ENCODE measurements at regions of chr17 and their contacts with region 1.

Region 1: DNA sequence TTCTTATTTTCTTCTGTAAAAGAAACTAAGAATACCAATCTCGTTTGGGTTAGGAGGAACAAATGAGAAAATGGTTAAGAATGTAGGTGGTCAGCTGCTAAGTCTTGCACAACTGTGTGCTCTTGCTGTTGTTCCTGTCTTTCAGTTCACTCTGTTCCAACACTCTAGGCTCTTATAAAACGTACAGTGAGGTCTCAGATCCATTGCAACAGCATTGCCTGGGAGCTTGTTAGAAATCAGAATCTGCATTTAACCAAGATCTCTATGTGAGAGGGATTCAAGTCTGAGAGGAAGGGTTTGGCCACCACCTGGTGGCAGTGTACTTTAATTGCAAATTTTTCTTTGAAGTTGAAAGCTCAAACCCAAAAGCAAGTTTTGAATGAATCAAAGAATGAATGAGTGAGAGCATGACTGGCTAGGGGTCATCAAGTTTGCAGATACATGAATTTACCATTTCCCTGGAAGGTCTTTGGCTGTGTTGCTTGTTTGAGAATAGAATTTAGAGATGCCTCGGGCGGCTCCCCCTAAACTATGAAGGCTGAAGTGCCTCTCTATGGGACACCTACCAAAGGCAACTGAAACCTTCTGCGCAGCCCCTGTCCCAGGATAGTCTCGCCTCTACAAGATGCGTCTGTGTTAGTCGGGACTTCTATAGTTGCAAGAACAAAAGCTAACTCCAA is 2.5 kb downstream of the ALOX15B start:
- DNase-seq: peak; percentile 30 to 60 (median 38)
- ATAC-seq: peak; percentile 57; the same call in 2 of the 3 replicates
- H3K4me3 ChIP-seq: no peak overlapping the region
- H3K27ac ChIP-seq: no peak overlapping the region
- H3K4me1 ChIP-seq: peaks cover 0 to 6% of the 10 kb centered on the region in 2 experiments; a peak in 3 of 5 replicates
- H3K27me3 ChIP-seq: peaks cover 11 to 30% of the 10 kb centered on the region in 2 experiments; a peak in 4 of 5 replicates
- CTCF ChIP-seq: peak; percentile 45 to 65 (median 47); a peak in 4 of 6 replicates
- EP300 ChIP-seq: no peak
- POLR2A ChIP-seq: no peak
- RAD21 ChIP-seq: peak; percentile 45 to 72

Region 2: DNA sequence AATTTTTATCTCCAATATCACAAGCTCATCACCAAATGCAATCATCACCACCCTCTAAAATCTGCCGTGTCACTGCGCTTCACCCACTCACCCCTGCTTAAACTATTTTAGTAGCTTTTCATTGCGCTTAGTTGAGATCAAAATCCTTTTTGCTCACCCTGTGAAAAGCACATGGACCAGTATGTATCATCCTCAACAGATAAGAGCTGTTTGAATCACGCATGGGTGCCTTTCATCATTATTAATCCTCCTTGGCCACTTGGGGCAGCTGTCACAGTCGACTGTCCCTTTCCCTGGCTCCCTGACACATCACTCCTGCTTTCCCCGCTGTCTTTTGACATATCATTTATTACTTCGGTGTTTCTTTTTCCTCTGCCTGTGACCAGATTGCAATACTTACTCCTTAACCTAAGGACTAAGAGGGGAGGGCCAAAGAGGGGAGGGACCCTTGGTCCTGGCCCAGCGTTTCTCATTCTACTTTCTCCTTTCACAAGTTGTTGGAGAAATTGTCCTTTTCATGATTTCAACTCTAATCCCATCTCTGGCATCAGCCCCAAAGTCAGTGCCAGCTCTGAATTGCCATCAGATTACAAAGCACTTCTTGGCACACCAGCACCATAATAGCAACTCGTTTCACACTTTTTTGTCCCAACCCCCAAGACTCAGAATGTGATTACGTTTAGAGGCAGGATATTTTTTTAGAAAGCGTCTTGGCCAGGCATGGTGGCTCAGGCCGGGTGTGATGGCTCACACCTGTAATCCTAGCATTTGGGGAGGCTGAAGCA is 216.0 kb before region 1 on chr17:
- CTCF ChIA-PET with region 1: no interaction called
- POLR2A ChIA-PET with region 1: no interaction called
- in situ Hi-C with region 1: no loop called
- intact Hi-C with region 1: loop called (anchors 10 kb)
- DNase-seq: peak in 1 of 4 experiments; percentile 29
- ATAC-seq: 0 out of 3 replicates have a peak, but pooled peaks have one; percentile 47
- H3K4me3 ChIP-seq: no peak overlapping the region
- H3K27ac ChIP-seq: no peak overlapping the region
- H3K4me1 ChIP-seq: peaks cover 0 to 9% of the 10 kb centered on the region in 2 experiments; a peak in 2 of 5 replicates
- H3K27me3 ChIP-seq: peaks cover 9 to 32% of the 10 kb centered on the region in 2 experiments; a peak in 4 of 5 replicates
- CTCF ChIP-seq: peak; percentile 16 to 42 (median 35); a peak in 3 of 6 replicates
- EP300 ChIP-seq: no peak
- POLR2A ChIP-seq: no peak
- RAD21 ChIP-seq: no peak

Region 3: DNA sequence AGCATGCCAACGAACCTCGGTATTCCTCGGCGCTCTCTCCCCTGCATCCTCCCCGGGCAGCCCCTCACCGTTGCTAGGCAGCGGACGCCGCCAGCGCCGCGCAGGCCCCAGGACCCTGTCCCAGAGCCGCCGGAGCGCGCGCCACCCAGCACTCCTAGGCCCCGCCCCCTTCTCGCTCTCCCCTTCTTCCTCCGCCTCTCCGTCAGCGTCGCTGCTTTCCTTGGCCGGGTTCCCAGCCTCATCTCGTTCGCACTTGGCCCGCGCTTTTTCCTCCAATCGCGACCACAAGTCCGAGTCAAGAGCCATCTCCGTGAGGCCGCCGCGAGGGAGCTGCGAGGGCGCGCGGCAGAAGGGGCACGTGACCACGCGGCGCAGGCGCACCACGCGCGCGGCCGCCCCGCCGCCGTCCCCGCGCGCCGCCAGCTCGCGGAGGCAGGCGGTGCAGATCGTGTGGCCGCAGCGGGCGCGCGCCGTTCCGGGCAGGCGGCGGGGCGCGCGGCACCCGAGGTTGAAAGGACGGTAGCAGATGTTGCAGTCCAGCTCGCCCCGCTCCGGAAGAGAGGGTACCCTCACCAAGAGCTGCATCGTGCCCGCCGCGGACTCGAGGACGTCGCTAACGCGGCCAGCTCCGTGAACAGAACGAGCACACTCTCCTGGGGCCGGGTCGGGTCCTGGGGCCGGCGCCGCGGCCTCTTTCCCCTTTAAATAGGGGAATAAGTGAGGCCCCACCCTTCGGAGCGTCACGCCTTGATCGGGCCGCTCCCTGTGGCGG is 125.6 kb before region 1 on chr17 and contains the start of gene RNF227:
- CTCF ChIA-PET with region 1: interaction called, 4 read pairs
- POLR2A ChIA-PET with region 1: no interaction called
- in situ Hi-C with region 1: no loop called
- intact Hi-C with region 1: loop called (anchors 1 kb)
- DNase-seq: peak; percentile 72 to 92 (median 74)
- ATAC-seq: peak; percentile 87
- H3K4me3 ChIP-seq: peak within 1 kb of the TSS; percentile 46
- H3K27ac ChIP-seq: peak within 1 kb of the TSS; percentile 88
- H3K4me1 ChIP-seq: peaks cover 18 to 24% of the 10 kb centered on the region in 2 experiments; a peak in 4 of 5 replicates
- H3K27me3 ChIP-seq: no peaks in the 10 kb centered on the region
- CTCF ChIP-seq: no peak
- EP300 ChIP-seq: no peak
- POLR2A ChIP-seq: peak; percentile 70
- RAD21 ChIP-seq: no peak
- polyA plus RNA-seq, gene RNF227: 1.1 to 1.5 TPM

Region 4: DNA sequence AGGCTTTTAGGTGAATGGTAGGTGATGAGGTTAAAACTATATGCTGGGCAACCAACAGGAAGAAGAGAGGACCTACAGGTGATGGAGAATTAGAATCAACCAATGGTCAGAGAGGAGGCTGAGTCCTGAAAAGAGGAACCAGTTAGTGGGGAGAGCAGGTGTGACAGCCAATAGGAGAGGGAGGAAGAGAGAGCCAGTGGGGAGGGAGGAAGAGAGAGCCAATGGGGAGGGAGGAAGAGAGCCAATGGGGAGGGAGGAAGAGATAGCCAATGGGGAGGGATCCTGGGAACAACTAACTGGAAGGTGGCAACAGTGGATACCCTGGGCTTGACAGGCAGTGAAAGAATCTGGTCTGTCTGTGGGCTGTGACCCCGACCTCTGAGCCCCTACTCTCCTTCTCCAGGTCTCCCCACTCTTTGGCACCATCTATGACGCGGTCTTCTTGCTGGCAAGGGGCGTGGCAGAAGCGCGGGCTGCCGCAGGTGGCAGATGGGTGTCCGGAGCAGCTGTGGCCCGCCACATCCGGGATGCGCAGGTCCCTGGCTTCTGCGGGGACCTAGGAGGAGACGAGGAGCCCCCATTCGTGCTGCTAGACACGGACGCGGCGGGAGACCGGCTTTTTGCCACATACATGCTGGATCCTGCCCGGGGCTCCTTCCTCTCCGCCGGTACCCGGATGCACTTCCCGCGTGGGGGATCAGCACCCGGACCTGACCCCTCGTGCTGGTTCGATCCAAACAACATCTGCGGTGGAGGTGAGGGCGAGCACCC is 35.2 kb before region 1 on chr17:
- CTCF ChIA-PET with region 1: no interaction called
- POLR2A ChIA-PET with region 1: no interaction called
- in situ Hi-C with region 1: loop called (anchors 5 kb)
- intact Hi-C with region 1: no loop called
- DNase-seq: peak in 3 of 4 experiments; percentile 68 to 78 (median 77)
- ATAC-seq: peak; percentile 92
- H3K4me3 ChIP-seq: no peak overlapping the region
- H3K27ac ChIP-seq: no peak overlapping the region
- H3K4me1 ChIP-seq: peaks cover 0 to 19% of the 10 kb centered on the region in 2 experiments; a peak in 2 of 5 replicates
- H3K27me3 ChIP-seq: peaks cover 13 to 62% of the 10 kb centered on the region in 2 experiments; a peak in 4 of 5 replicates
- CTCF ChIP-seq: no peak
- EP300 ChIP-seq: no peak
- POLR2A ChIP-seq: no peak
- RAD21 ChIP-seq: no peak

Region 5: GRCh38 chr17:8016632-8017478 is 24.5 kb before region 1 on chr17:
- CTCF ChIA-PET with region 1: interaction called, 17 read pairs
- POLR2A ChIA-PET with region 1: no interaction called
- in situ Hi-C with region 1: no loop called
- intact Hi-C with region 1: no loop called
- DNase-seq: peak; percentile 53 to 60 (median 57)
- ATAC-seq: peak; percentile 95
- H3K4me3 ChIP-seq: no peak overlapping the region
- H3K27ac ChIP-seq: no peak overlapping the region
- H3K4me1 ChIP-seq: peaks cover 0 to 13% of the 10 kb centered on the region in 2 experiments; a peak in 2 of 5 replicates
- H3K27me3 ChIP-seq: peaks cover 9 to 71% of the 10 kb centered on the region in 2 experiments; a peak in 4 of 5 replicates
- CTCF ChIP-seq: peak; percentile 64 to 82 (median 72)
- EP300 ChIP-seq: no peak
- POLR2A ChIP-seq: no peak
- RAD21 ChIP-seq: peak; percentile 47 to 71